Common myeloid progenitor, CD34-positive (primary cell): ENCODE measurements at regions of chr12 and their contacts with region 1.

Region 1: DNA sequence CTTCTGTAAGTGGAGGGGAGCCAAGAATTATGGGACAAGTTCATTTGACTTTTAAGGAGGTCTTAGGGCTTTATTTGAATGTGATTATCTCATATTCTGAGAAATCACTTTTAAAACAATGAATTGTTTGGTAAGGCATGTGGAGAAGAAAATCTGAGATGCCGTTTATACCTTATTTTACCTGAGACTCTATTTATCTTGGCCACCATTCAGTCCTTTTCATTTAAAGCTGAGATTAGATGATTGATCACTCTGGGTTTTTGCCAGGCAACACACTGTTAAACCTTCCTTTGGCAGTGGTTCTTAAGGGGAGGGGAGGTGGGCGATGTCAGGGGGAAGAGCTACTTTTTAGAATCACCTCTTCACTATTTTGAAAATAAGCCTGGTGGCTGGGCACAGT is 11.4 kb downstream of the CAND1 start:
- DNase-seq: no peak
- H3K4me3 ChIP-seq: no peak overlapping the region
- H3K27ac ChIP-seq: no peak overlapping the region
- H3K4me1 ChIP-seq: peaks cover 0 to 6% (median 2%) of the 10 kb centered on the region in 4 experiments
- H3K27me3 ChIP-seq: no peaks in the 10 kb centered on the region

Region 2: GRCh38 chr12:67237231-67237630 is 43.3 kb before region 1 on chr12:
- CTCF ChIA-PET with region 1: no interaction called
- POLR2A ChIA-PET with region 1: no interaction called
- DNase-seq: no peak
- H3K4me3 ChIP-seq: no peak overlapping the region
- H3K27ac ChIP-seq: no peak overlapping the region
- H3K4me1 ChIP-seq: no peaks in the 10 kb centered on the region
- H3K27me3 ChIP-seq: peaks cover 0 to 3% (median 0%) of the 10 kb centered on the region in 5 experiments

Region 3: GRCh38 chr12:67268896-67269631 is 11.5 kb before region 1 on chr12 and contains the start of gene CAND1:
- CTCF ChIA-PET with region 1: interaction called, 11 read pairs
- POLR2A ChIA-PET with region 1: interaction called, 3 read pairs
- DNase-seq: peak; percentile 99 to 100 (median 100)
- H3K4me3 ChIP-seq: peak within 1 kb of the TSS; percentile 83 to 97 (median 93)
- H3K27ac ChIP-seq: peak within 1 kb of the TSS; percentile 94 to 98
- H3K4me1 ChIP-seq: peaks cover 3 to 33% (median 15%) of the 10 kb centered on the region in 4 experiments
- H3K27me3 ChIP-seq: no peaks in the 10 kb centered on the region